ENCODE measurements at regions of chr17 and their contacts with region 1.

Region 1: DNA sequence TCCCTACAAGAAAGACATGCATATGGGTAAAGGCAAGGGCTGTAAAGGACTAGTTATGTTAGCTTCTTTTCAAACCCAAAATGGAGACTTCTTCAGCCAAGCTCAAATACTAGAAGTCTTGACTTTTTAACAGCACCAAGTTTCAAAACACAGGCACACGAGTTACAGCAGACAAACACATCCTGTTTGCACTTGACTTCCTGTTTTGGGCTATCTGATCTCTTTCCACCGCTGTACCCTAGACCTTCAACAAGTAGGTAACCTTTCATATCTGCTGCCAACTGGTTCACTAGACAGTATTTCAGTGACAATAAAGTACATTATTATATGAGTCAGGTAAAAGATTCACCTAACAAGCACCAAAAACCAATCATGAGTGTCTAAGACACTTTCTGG is 12.3 kb downstream of the RFFL start:
- DNase-seq: peak in 1 of 2 donors; percentile 89
- ATAC-seq: peak; percentile 65 to 84 (median 77)
- H3K4me3 ChIP-seq: no peak overlapping the region
- H3K4me3 Mint-ChIP-seq: peak overlapping the region; percentile 84
- H3K27ac ChIP-seq: peak overlapping the region; percentile 83
- H3K27ac Mint-ChIP-seq: peak overlapping the region; percentile 89 to 99
- H3K4me1 ChIP-seq: peaks cover 48% of the 10 kb centered on the region
- H3K4me1 Mint-ChIP-seq: peaks cover 61 to 68% of the 10 kb centered on the region in 2 donors
- H3K27me3 ChIP-seq: no peaks in the 10 kb centered on the region
- H3K27me3 Mint-ChIP-seq: no peaks in the 10 kb centered on the region
- CTCF ChIP-seq: no peak

Region 2: GRCh38 chr17:35022536-35023063 is 28.6 kb before region 1 on chr17:
- intact Hi-C with region 1: loop called (anchors 2 kb)
- DNase-seq: peak; percentile 74 to 85
- ATAC-seq: peak; percentile 97 to 99 (median 99)
- H3K4me3 ChIP-seq: no peak overlapping the region
- H3K4me3 Mint-ChIP-seq: peak overlapping the region; percentile 75
- H3K27ac ChIP-seq: peak overlapping the region; percentile 90
- H3K27ac Mint-ChIP-seq: peak overlapping the region; percentile 99
- H3K4me1 ChIP-seq: peaks cover 25% of the 10 kb centered on the region
- H3K4me1 Mint-ChIP-seq: peaks cover 31 to 38% of the 10 kb centered on the region in 2 donors
- H3K27me3 ChIP-seq: no peaks in the 10 kb centered on the region
- H3K27me3 Mint-ChIP-seq: no peaks in the 10 kb centered on the region
- CTCF ChIP-seq: no peak

Region 3: DNA sequence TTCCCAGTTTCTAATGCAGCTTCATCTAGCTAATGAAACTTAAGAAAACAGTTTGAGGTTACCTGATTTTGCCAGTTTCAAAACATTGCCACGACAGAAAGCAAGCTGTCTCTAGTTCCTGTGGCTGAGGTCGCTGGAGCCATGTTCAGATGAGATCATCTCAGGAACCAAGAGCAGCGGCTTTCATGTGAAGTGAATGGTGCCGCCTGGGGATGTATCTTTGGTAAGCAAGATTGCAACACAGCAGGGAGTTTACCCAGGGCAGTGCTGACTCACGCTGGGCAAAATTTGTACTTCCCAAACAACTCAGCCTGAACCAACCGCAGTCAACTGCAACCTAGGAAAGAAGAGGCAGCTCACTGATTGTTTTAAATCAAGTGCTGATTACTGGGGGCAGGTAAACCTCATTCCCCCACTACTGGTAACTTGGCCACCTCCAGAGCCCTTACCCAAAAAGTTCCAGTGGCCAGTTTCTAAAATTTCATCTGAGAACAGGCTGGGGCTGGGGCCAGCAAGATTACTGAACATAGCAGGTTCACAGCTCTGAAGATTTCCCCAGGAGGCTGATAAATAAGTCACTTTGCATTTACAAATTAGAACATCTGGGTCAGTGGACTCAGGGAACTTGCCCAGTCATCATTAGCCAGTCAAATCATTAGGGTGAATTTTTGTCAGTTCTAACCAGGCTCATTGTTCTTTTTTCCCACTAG is 12.5 kb after region 1 on chr17 and contains the start of gene RFFL:
- intact Hi-C with region 1: loop called (anchors 1 kb)
- DNase-seq: peak; percentile 78 to 96
- ATAC-seq: peak; percentile 92 to 98 (median 95)
- H3K4me3 ChIP-seq: peak within 1 kb of the TSS; percentile 23
- H3K4me3 Mint-ChIP-seq: peak within 1 kb of the TSS; percentile 59
- H3K27ac ChIP-seq: peak within 1 kb of the TSS; percentile 82
- H3K27ac Mint-ChIP-seq: peak within 1 kb of the TSS; percentile 98 to 99
- H3K4me1 ChIP-seq: peaks cover 16% of the 10 kb centered on the region
- H3K4me1 Mint-ChIP-seq: peaks cover 49 to 58% of the 10 kb centered on the region in 2 donors
- H3K27me3 ChIP-seq: no peaks in the 10 kb centered on the region
- H3K27me3 Mint-ChIP-seq: no peaks in the 10 kb centered on the region
- CTCF ChIP-seq: no peak
- total RNA-seq, gene RFFL: 50.0 to 86.6 (median 75.9) TPM

Measured in natural killer cell (primary cell).